ENCODE measurements at regions of chr20 and their contacts with region 1.

Region 1: DNA sequence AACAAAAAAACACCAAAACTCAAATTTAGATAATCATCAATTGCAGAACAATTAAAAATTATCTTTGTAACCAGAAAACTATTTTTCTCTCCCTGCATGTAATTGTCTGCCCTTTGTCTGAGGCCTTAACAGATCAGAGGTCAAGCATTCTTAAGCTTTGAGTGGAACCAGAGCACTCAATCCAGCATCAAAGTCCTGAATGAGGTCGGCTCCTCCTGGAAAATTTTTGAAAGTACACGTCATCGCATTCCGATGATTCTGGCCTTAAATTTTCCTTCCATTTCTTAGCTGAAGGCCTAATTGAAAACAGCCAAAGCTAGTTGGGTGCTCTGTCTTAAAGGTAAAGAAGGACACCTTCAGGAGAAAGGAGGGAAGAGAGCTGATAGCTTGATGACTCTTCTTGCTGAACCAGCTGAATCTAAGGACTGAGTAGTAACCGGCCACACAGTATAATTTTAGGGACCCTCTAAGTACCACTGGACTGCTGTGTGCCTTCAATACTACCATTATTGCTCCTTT is 510.2 kb upstream of the SULF2 start:
- DNase-seq: peak; percentile 98
- ATAC-seq: peak; percentile 85
- H3K4me3 ChIP-seq: no peak overlapping the region
- H3K27ac ChIP-seq: peak overlapping the region; percentile 36
- H3K4me1 ChIP-seq: peaks cover 50% of the 10 kb centered on the region
- H3K27me3 ChIP-seq: no peaks in the 10 kb centered on the region
- CTCF ChIP-seq: peak; percentile 83

Region 2: GRCh38 chr20:47677635-47678453 is 617.7 kb before region 1 on chr20:
- CTCF ChIA-PET with region 1: no interaction called
- POLR2A ChIA-PET with region 1: no interaction called
- intact Hi-C with region 1: loop called (anchors 5 kb)
- DNase-seq: peak; percentile 77
- ATAC-seq: peak; percentile 82
- H3K4me3 ChIP-seq: no peak overlapping the region
- H3K27ac ChIP-seq: no peak overlapping the region
- H3K4me1 ChIP-seq: no peaks in the 10 kb centered on the region
- H3K27me3 ChIP-seq: no peaks in the 10 kb centered on the region
- CTCF ChIP-seq: peak; percentile 96

Region 3: DNA sequence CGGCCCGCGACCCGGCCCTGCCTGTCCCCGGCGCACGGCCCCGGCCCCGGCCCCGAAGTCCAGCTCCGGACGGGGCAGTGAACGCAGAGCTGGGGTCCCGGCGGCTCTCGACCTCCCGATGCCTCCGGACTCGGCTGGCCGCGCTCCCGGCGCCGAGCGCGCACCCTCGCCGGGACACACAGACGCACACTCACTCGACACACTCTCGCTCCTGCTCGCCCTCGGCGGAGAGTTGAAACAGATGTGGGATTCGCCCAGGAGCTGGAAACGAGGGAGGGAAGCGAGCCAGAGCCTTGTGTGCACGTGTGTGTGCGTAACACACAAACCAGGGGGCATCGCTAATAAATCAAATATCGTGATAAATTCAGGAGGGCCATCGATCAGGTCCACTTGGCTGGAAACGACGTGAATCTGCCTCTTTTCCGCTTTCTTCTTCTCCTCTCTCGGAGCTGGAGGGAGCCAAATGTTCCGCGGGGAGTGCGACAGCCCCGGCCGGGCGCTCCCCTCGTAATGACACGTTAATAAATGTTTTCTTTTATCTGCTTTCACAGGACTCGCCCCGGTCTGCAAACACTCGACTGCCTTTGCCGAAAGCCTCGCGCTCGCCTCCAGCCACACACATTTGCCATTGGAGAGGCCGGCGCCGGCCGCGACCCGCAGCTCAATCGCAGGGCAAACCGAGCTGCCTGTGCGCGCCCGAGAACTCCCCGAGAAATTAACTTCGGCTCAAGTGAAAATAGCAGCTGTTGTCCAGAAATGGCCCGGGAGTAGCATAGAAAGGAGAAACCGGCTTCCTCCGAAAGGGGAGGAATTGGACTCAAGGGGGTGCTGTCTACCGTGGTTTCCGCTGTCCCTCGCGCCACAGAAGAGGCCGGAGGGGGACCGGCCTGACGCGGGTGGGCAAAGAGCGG is 509.4 kb before region 1 on chr20:
- CTCF ChIA-PET with region 1: interaction called, 11 read pairs
- POLR2A ChIA-PET with region 1: interaction called, 4 read pairs
- intact Hi-C with region 1: loop called (anchors 1 kb)
- DNase-seq: peak; percentile 90
- ATAC-seq: peak; percentile 35
- H3K4me3 ChIP-seq: peak overlapping the region; percentile 83
- H3K27ac ChIP-seq: peak overlapping the region; percentile 87
- H3K4me1 ChIP-seq: peaks cover 66% of the 10 kb centered on the region
- H3K27me3 ChIP-seq: no peaks in the 10 kb centered on the region
- CTCF ChIP-seq: peak; percentile 96

Region 4: GRCh38 chr20:47929363-47930123 is 366.0 kb before region 1 on chr20:
- CTCF ChIA-PET with region 1: interaction called, 4 read pairs
- POLR2A ChIA-PET with region 1: interaction called, 4 read pairs
- intact Hi-C with region 1: loop called (anchors 5 kb)
- DNase-seq: peak; percentile 92
- ATAC-seq: peak; percentile 64
- H3K4me3 ChIP-seq: no peak overlapping the region
- H3K27ac ChIP-seq: peak overlapping the region; percentile 93
- H3K4me1 ChIP-seq: peaks cover 64% of the 10 kb centered on the region
- H3K27me3 ChIP-seq: no peaks in the 10 kb centered on the region
- CTCF ChIP-seq: no peak

Region 5: DNA sequence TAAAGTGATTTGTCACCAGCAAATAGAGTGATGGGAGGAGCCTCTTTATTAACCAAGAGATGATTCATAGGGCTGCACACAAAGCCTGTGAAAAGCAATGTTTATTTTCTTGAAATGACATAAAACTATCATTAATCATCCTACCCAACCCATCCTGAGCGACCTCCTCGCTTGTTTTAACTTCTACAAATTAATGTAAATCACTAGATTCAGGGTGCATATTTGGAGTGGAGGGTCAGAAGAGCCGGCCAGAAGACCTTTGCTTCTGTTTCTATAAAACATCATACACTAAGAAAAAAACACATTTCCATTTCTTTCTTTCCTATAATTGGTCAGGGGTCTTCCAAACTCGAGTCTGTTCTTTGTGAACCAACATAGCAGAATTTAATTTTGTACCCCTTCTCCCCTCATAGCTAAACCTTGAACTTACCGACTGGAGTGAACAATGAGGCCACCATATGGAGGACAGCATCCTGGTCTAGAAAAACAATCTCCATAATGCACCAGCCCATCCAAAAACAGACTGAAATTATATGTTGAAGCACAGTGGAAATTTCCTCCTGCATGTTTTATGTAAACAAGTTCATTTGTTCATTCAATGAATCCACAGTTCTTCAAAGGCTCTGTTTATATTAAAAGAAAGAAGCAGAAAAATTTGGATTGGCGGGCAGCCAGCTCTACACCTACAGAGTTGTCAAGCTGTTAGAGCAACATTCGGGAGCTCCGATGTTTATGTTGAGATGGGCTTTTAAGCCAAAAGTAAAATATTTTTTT is 115.1 kb before region 1 on chr20:
- CTCF ChIA-PET with region 1: no interaction called
- POLR2A ChIA-PET with region 1: no interaction called
- intact Hi-C with region 1: loop called (anchors 5 kb)
- DNase-seq: peak; percentile 93
- ATAC-seq: peak; percentile 94
- H3K4me3 ChIP-seq: peak overlapping the region; percentile 45; the same call in 1 of the 2 replicates
- H3K27ac ChIP-seq: peak overlapping the region; percentile 97
- H3K4me1 ChIP-seq: peaks cover 22% of the 10 kb centered on the region
- H3K27me3 ChIP-seq: no peaks in the 10 kb centered on the region
- CTCF ChIP-seq: no peak

Region 6: GRCh38 chr20:48198929-48199451 is 96.5 kb before region 1 on chr20:
- CTCF ChIA-PET with region 1: no interaction called
- POLR2A ChIA-PET with region 1: no interaction called
- intact Hi-C with region 1: no loop called
- DNase-seq: peak; percentile 61
- ATAC-seq: peak; percentile 50
- H3K4me3 ChIP-seq: no peak overlapping the region
- H3K27ac ChIP-seq: no peak overlapping the region
- H3K4me1 ChIP-seq: peaks cover 9% of the 10 kb centered on the region; the same call in 1 of the 2 replicates
- H3K27me3 ChIP-seq: no peaks in the 10 kb centered on the region
- CTCF ChIP-seq: no peak